GM12878 (cell line): ENCODE measurements at regions of chr11 and their contacts with region 1.

Region 1: GRCh38 chr11:41947392-41947791 is 487.9 kb upstream of the LRRC4C start:
- DNase-seq: no peak
- ATAC-seq: no peak
- H3K4me3 ChIP-seq: no peak overlapping the region
- H3K27ac ChIP-seq: no peak overlapping the region
- H3K4me1 ChIP-seq: no peaks in the 10 kb centered on the region
- H3K27me3 ChIP-seq: no peaks in the 10 kb centered on the region; a peak in 1 of 4 replicates
- CTCF ChIP-seq: no peak
- EP300 ChIP-seq: no peak
- POLR2A ChIP-seq: no peak
- RAD21 ChIP-seq: no peak

Region 2: GRCh38 chr11:41920374-41920773 is 27.0 kb before region 1 on chr11:
- CTCF ChIA-PET with region 1: interaction called, 3 read pairs
- POLR2A ChIA-PET with region 1: interaction called, 5 read pairs
- RAD21 ChIA-PET with region 1: interaction called, 6 read pairs
- SMC1A ChIA-PET with region 1: interaction called, 12 read pairs
- in situ Hi-C with region 1: no loop called
- intact Hi-C with region 1: no loop called
- DNase-seq: no peak
- ATAC-seq: peak; percentile 79
- H3K4me3 ChIP-seq: no peak overlapping the region
- H3K27ac ChIP-seq: no peak overlapping the region
- H3K4me1 ChIP-seq: no peaks in the 10 kb centered on the region
- H3K27me3 ChIP-seq: no peaks in the 10 kb centered on the region
- CTCF ChIP-seq: no peak
- EP300 ChIP-seq: no peak
- POLR2A ChIP-seq: no peak
- RAD21 ChIP-seq: no peak

Region 3: DNA sequence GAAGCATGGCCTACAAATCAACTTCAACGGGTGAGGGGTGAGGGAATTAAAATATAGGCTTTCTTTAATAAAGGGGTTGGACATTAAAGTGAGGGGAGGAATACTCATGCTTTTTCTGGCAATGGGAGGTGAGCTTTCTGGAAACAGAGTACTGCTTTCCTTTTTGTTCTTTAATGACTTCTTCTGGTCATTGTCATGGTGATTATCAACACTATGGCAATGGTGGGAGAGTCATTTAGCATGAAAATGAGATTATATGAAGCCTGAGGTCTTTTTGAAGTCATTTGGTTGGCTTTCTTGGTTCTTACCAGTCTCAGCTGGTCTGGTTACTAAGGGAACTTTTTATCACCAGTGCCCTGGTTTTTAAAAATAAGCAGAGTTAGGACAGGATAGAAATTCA is 12.2 kb before region 1 on chr11:
- CTCF ChIA-PET with region 1: no interaction called
- POLR2A ChIA-PET with region 1: no interaction called
- RAD21 ChIA-PET with region 1: no interaction called
- SMC1A ChIA-PET with region 1: interaction called, 11 read pairs
- in situ Hi-C with region 1: no loop called
- intact Hi-C with region 1: no loop called
- DNase-seq: no peak
- ATAC-seq: no peak
- H3K4me3 ChIP-seq: no peak overlapping the region
- H3K27ac ChIP-seq: no peak overlapping the region
- H3K4me1 ChIP-seq: no peaks in the 10 kb centered on the region
- H3K27me3 ChIP-seq: no peaks in the 10 kb centered on the region
- CTCF ChIP-seq: no peak
- EP300 ChIP-seq: no peak
- POLR2A ChIP-seq: no peak
- RAD21 ChIP-seq: no peak